Transverse colon (tissue), 4 donors: ENCODE measurements at regions of chr14 and their contacts with region 1.

Region 1: DNA sequence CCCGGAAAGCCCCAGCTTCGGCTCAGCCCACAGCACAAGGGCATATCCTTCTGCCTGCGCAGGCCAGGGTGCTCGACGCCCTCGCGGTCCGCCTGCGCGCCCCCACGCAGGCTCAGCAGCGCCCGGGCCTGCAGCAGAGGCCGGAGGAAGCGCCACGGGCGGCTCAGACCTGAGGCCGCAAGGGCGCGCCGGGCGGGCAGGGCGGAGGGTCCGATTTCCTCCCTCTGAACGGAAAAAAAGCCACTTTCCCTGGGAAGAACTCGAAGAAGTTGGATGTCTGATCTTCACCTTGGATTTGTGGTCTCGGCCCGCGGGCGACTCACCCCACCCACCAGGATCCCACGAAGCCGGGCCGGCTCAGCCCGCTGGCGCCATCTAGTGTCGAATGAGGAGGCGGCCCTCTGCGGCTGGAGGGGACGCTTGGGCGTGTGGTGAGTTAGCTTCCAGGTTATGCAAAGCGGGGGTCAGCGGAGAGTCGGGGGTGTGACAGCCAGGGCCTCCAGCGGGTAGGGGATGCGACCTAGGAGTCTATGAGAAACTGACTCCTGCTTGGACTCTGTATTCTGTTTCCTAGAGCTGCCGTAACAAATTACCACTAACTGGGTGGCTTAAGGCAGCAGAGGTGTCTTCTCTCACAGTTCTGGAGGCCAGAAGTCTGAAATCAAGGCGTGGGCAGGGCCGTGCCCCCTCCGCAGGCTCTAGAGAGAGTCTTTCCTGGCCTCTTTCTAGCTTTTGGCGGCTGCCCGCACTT is 40.0 kb upstream of the SRSF5 start:
- DNase-seq: peak; percentile 85
- H3K4me3 ChIP-seq: peak overlapping the region; percentile 18 to 52 (median 26)
- H3K27ac ChIP-seq: peak overlapping the region; percentile 37 to 69 (median 51)
- H3K4me1 ChIP-seq: peaks cover 0 to 16% (median 9%) of the 10 kb centered on the region in 4 donors
- H3K27me3 ChIP-seq: no peaks in the 10 kb centered on the region
- CTCF ChIP-seq: peak; percentile 96 to 100 (median 98)
- EP300 ChIP-seq: no peak
- POLR2A ChIP-seq: no peak

Region 2: DNA sequence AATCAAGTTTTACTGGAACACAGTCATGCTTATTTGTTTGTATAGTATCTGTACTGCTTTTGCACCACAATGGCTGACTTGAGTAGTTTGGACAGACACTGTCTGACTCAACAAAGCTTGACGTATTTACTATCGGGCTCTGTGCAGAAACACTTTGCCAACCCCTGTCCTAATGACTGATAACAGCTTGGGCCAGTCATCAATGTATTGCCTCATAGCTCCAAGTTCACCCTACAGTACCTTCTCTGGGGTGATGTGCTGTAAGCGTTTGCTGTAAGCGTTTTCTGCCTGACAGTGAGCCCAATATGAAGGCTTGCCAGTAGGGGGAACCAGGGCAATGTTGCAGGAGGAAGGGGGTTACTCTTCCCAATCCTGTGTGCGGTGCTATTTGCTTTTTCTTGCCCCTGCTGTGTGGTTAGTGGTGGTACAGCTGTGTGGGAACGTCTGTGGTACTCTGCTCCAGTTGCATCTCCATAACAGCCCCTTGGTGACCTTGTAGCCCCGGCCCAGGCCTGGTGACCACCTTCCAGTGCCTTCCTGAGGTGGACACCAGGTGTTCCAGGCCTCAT is 146.8 kb before region 1 on chr14:
- in situ Hi-C with region 1: loop called (anchors 5 to 10 kb)
- intact Hi-C with region 1: loop called (anchors 2 kb)
- DNase-seq: no peak
- H3K4me3 ChIP-seq: no peak overlapping the region
- H3K27ac ChIP-seq: no peak overlapping the region
- H3K4me1 ChIP-seq: peaks cover 0 to 2% (median under 1%) of the 10 kb centered on the region in 4 donors
- H3K27me3 ChIP-seq: peaks cover 24% of the 10 kb centered on the region
- CTCF ChIP-seq: peak in 1 of 5 experiments; percentile 34
- EP300 ChIP-seq: no peak
- POLR2A ChIP-seq: no peak

Region 3: DNA sequence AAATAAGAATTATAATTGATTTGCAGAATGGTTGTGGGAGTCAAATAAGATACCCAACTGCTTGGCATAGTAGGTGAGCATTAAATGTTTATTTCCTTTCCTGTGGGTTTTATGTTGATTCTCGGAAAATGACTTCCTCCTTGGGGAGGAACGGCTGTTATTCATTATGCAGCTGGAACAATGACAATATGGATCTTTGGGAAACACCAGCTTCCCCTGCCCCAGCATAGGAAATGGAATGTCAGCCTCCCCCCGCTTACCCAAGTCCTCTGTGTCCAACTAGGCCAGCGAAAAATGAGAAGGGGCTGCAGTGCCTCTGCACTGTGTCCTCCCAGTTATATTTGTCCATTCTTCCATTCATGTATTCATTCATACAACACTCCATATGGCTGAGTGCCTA is 140.5 kb before region 1 on chr14:
- in situ Hi-C with region 1: loop called (anchors 5 to 10 kb)
- intact Hi-C with region 1: loop called (anchors 2 kb)
- DNase-seq: no peak
- H3K4me3 ChIP-seq: no peak overlapping the region
- H3K27ac ChIP-seq: peak overlapping the region in 3 of 4 donors; percentile 14 to 41 (median 33)
- H3K4me1 ChIP-seq: peaks cover 0 to 13% (median 5%) of the 10 kb centered on the region in 4 donors
- H3K27me3 ChIP-seq: no peaks in the 10 kb centered on the region
- CTCF ChIP-seq: no peak
- EP300 ChIP-seq: no peak
- POLR2A ChIP-seq: no peak

Region 4: DNA sequence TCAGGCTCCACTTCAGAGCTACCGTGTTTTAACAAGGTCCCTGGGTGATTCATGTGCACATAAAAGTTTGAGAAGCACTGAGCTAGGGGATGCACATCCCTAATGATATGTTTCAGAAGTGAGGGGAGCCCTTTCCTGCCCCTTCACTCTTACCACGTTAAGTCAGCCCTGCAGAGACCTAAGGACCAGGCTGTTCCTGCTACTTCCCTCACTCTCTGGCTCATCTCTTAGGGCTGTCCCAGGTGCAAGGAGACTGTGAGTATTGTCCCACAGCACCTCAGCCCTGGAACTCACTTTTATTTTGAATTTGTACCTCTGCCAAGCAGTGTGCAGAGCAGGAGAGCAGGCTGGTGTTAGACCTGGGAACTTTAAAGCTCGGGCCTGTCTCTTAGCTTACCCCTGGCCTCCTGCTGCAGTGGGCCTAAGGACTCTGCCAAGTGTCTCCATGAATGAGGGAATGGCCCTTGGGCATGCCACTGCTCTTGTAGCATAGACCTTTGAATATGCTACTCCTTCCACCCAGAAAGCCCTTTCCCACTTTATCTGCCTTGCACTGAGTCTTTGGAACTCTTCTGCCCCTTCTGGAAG is 126.5 kb before region 1 on chr14:
- in situ Hi-C with region 1: no loop called
- intact Hi-C with region 1: loop called (anchors 5 kb)
- DNase-seq: no peak
- H3K4me3 ChIP-seq: no peak overlapping the region
- H3K27ac ChIP-seq: no peak overlapping the region
- H3K4me1 ChIP-seq: peaks cover 0 to 7% (median 4%) of the 10 kb centered on the region in 4 donors
- H3K27me3 ChIP-seq: no peaks in the 10 kb centered on the region
- CTCF ChIP-seq: no peak
- EP300 ChIP-seq: no peak
- POLR2A ChIP-seq: no peak

Region 5: DNA sequence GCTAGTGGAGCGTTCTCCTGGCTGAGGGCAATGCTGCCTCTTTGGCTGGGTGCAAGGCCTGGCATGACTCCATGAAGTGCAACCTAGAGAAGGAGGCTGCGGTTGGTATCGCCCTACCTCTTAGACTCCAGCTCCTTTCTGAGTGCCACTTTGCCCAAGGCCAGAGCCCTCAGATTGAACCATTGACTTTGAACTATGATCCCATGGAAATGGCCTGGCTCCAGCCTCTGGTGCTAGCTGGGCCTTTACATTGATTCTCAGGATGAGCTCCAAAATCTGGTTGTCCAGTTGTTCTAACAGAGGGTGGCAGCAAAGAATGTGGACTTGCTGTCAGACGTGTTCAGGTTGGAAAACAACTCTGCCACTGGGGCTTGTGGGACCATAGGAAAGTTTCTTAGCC is 136.1 kb after region 1 on chr14:
- in situ Hi-C with region 1: no loop called
- intact Hi-C with region 1: no loop called
- DNase-seq: no peak
- H3K4me3 ChIP-seq: no peak overlapping the region
- H3K27ac ChIP-seq: no peak overlapping the region
- H3K4me1 ChIP-seq: no peaks in the 10 kb centered on the region
- H3K27me3 ChIP-seq: no peaks in the 10 kb centered on the region
- CTCF ChIP-seq: no peak
- EP300 ChIP-seq: no peak
- POLR2A ChIP-seq: no peak

Region 6: GRCh38 chr14:69953266-69953915 is 226.5 kb after region 1 on chr14:
- in situ Hi-C with region 1: no loop called
- intact Hi-C with region 1: no loop called
- DNase-seq: no peak
- H3K4me3 ChIP-seq: no peak overlapping the region
- H3K27ac ChIP-seq: no peak overlapping the region
- H3K4me1 ChIP-seq: no peaks in the 10 kb centered on the region
- H3K27me3 ChIP-seq: no peaks in the 10 kb centered on the region
- CTCF ChIP-seq: no peak
- EP300 ChIP-seq: no peak
- POLR2A ChIP-seq: no peak

Region 7: DNA sequence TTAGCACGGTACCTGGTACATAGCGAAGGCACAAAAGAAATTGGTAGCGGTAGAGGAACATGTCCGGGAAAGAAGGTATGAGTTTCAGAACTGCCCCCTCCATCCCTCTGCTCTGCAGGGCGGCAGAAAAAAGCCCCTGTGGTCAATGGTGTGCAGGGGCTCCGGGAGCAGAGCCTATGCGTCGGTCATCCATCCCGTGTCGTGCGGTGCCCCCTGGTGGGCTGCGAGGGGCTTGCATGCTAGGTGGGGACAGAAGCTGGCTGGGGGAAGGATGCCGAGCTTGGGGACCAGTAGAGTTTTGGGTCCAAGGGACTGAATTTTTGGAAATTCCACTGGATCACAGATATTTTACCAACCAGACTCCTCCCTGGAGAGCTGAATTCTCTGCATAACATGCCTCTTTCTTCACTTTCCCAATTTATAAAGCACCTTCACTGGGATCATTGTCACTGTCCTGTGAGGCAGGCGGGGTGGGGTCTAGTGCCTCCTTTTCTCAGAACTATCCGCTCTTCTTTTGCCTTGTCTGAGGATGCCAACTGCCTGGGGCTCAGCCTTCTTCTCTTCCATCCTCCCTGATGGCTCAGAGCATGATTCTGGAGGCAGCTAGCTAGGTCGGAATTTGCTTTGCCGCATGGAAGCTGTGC is 301.0 kb after region 1 on chr14:
- in situ Hi-C with region 1: loop called in 1 of 4 experiments (anchors 10 kb)
- intact Hi-C with region 1: no loop called
- DNase-seq: peak; percentile 71
- H3K4me3 ChIP-seq: no peak overlapping the region
- H3K27ac ChIP-seq: no peak overlapping the region
- H3K4me1 ChIP-seq: no peaks in the 10 kb centered on the region
- H3K27me3 ChIP-seq: peaks cover 4% of the 10 kb centered on the region
- CTCF ChIP-seq: peak; percentile 78 to 85 (median 80)
- EP300 ChIP-seq: no peak
- POLR2A ChIP-seq: no peak